ENCODE measurements at regions of chr11 and their contacts with region 1.

Region 1: DNA sequence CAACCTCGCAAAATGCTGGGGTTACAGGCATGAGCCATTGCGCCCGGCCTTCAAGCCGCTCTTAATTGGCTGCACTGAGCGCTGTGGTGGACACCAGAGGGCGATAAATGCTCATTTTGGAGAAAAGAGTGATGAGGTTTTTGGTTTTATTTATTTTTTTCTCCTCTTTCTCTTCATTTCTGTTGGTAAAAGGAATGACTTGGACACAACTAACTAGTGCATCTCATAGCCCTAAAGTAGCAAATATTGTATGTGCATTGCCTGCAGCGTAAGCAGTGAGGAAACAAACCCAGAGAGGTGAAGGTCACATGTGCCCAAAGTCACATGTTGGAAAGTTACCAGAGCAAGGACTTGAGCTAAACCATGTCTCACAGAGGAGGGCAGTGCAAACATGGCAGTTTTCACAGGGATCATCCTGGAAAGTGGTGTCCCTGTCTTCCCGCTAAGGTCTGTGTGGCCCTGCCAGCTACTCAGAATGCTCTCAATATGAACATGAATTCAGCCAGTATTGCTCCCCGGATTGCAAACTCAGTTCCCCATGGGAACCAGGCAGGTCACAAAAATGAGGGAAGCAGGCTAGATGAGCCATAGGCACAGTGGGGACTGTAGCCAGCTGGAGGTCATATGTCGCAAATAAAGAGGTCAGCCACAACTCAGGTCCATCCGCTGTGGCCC is 8.6 kb upstream of the CD82 start:
- DNase-seq: peak in 4 of 5 donors; percentile 57 to 81 (median 66)
- ATAC-seq: peak; percentile 65 to 85 (median 78)
- H3K4me3 ChIP-seq: no peak overlapping the region
- H3K27ac ChIP-seq: peak overlapping the region in 1 of 12 donors; percentile 13
- H3K4me1 ChIP-seq: peaks cover 0 to 28% (median 5%) of the 10 kb centered on the region in 12 donors
- H3K27me3 ChIP-seq: no peaks in the 10 kb centered on the region
- CTCF ChIP-seq: peak; percentile 72 to 95 (median 82)
- POLR2A ChIP-seq: no peak

Region 2: GRCh38 chr11:44333271-44334218 is 223.3 kb before region 1 on chr11:
- intact Hi-C with region 1: no loop called
- DNase-seq: no peak
- ATAC-seq: no peak
- H3K4me3 ChIP-seq: no peak overlapping the region
- H3K27ac ChIP-seq: no peak overlapping the region
- H3K4me1 ChIP-seq: no peaks in the 10 kb centered on the region
- H3K27me3 ChIP-seq: peaks cover 0 to 70% (median 14%) of the 10 kb centered on the region in 9 donors
- CTCF ChIP-seq: no peak
- POLR2A ChIP-seq: no peak

Region 3: GRCh38 chr11:44911029-44911814 is 354.4 kb after region 1 on chr11:
- intact Hi-C with region 1: loop called (anchors 1 to 5 kb)
- DNase-seq: peak; percentile 81 to 91 (median 89)
- ATAC-seq: peak; percentile 67 to 82 (median 71)
- H3K4me3 ChIP-seq: peak overlapping the region in 3 of 12 donors; percentile 8 to 29 (median 8)
- H3K27ac ChIP-seq: peak overlapping the region in 7 of 12 donors; percentile 6 to 58 (median 31)
- H3K4me1 ChIP-seq: peaks cover 0 to 47% (median 26%) of the 10 kb centered on the region in 12 donors
- H3K27me3 ChIP-seq: no peaks in the 10 kb centered on the region
- CTCF ChIP-seq: peak; percentile 84 to 96 (median 90)
- POLR2A ChIP-seq: no peak

Measured in heart left ventricle (tissue), 16 donors.